Activated CD4-positive, alpha-beta T cell treated with anti-CD3 and anti-CD28 coated beads for 36 hours (primary cell): ENCODE measurements at regions of chr2 and their contacts with region 1.

Region 1: DNA sequence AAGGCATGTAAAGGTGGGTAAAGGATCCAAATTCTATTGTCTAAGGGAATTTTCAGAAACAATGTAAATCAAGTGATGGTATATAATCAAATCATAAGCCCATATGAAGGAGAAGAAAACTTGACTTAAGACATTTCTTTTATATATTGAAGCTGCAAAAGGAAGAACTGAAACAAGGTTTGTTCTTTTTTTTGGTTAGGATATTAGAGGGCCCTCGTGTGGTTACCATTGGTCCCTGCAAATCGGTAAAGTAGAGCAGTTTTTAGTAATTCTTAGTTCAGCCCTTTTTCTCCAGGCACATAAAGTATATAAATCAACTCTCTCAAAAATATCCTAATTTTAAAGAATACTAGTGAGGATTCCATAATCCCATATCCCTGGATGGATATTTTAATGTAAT is 105.6 kb upstream of the STK17B start:
- DNase-seq: peak; percentile 50
- ATAC-seq: peak; percentile 20
- H3K4me3 Mint-ChIP-seq: no peak overlapping the region
- H3K27ac Mint-ChIP-seq: peak overlapping the region; percentile 11
- H3K4me1 Mint-ChIP-seq: peaks cover 61% of the 10 kb centered on the region
- H3K27me3 Mint-ChIP-seq: no peaks in the 10 kb centered on the region

Region 2: DNA sequence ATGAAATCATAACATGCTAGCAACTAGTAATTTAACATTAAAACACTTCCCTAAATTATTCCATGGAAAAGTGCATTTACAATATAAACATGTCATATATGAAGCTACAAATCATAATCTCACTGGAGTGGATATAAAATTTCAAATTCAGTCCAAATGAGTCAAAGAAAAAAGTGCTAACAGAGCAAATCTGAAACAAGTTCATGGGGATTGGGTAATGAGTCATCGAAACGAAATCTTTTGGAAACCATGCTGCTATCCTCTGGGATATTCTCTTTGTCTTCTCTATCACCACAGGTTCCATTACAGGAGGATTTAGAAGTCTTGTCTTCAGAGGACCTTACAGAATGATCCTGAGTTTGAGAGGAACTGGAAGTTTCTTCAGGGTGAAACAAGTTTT is 139.7 kb before region 1 on chr2:
- CTCF ChIA-PET with region 1: interaction called, 10 read pairs
- POLR2A ChIA-PET with region 1: no interaction called
- intact Hi-C with region 1: loop called in 1 of 2 experiments (anchors 2 kb)
- DNase-seq: no peak
- ATAC-seq: no peak
- H3K4me3 Mint-ChIP-seq: no peak overlapping the region
- H3K27ac Mint-ChIP-seq: peak overlapping the region; percentile 59
- H3K4me1 Mint-ChIP-seq: peaks cover 26% of the 10 kb centered on the region
- H3K27me3 Mint-ChIP-seq: no peaks in the 10 kb centered on the region

Region 3: DNA sequence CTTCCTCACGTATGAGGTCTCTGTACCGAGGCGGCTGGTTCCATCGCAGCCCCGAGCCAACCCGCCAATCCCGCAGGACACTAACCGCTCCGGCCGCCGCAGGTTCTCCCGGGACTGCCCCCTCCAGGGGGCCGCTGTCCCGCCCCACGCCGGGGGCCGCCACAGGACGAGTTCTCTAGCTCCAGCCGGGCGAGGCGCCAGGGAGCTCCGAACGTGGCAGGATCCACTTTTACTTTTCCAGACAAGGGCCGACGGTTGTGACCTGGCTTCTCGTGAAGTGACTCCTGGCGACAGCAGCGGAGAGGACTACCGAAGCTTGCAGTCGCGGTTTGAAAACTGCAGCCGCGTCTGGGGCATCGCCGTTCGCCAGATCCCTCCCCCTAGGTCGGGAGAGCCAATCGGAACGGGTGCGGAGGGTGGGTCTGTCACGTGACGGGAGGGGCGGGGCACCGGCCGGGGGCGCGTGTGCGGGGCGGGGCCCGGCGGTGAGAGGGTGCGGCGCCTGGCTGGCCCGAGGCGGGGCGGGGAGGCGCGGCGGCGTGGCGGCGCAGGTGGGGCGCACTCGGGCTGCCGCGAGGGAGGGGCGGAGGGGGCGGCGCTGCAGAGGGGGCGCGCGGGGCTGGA is 105.6 kb before region 1 on chr2 and contains the start of gene STK17B:
- CTCF ChIA-PET with region 1: interaction called, 13 read pairs
- POLR2A ChIA-PET with region 1: interaction called, 4 read pairs
- intact Hi-C with region 1: loop called in 1 of 2 experiments (anchors 2 kb)
- DNase-seq: peak; percentile 99
- ATAC-seq: peak; percentile 76
- H3K4me3 Mint-ChIP-seq: peak within 1 kb of the TSS; percentile 92
- H3K27ac Mint-ChIP-seq: peak within 1 kb of the TSS; percentile 98
- H3K4me1 Mint-ChIP-seq: peaks cover 38% of the 10 kb centered on the region
- H3K27me3 Mint-ChIP-seq: no peaks in the 10 kb centered on the region
- total RNA-seq, gene STK17B: 159 to 178 TPM

Region 4: DNA sequence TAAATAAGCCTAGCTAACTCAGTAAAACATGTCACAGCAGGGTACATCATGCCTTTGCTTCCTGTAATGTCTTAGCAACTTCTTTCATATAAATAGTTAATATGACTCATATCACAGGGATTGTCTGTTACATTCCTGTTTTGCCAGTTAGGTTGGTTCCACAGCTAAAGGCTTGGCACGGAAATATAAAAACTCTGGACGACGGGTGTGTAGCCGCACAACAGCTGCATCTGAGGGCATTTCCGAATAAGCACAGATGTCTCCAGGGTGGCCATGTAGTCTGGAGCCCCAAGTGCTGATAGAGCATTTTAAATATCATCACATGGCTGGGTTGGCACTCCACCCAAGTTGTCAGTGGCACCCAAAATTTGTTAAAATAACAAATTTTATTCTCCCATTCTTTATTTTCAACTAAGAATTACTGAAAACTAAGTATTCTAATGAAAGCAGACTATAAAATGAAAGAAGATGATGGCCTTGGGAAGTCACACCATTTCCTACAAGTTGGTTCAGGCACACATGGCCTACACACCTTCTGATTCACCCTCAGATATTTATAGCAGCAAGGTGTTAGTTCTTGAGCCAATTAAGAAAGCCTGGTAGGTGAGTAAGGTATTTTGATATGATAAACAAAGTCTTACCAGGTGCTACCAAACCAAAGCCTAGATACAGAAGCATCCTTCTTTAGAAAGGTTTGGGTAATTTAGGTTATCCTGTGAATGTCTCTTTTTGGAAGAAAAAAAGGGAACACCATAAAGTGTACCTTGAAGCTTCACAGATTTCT is 43.8 kb before region 1 on chr2:
- CTCF ChIA-PET with region 1: interaction called, 4 read pairs
- POLR2A ChIA-PET with region 1: interaction called, 3 read pairs
- intact Hi-C with region 1: loop called in 1 of 2 experiments (anchors 2 kb)
- DNase-seq: no peak
- ATAC-seq: peak; percentile 45
- H3K4me3 Mint-ChIP-seq: peak overlapping the region; percentile 21
- H3K27ac Mint-ChIP-seq: peak overlapping the region; percentile 95
- H3K4me1 Mint-ChIP-seq: peaks cover 96% of the 10 kb centered on the region
- H3K27me3 Mint-ChIP-seq: no peaks in the 10 kb centered on the region

Region 5: DNA sequence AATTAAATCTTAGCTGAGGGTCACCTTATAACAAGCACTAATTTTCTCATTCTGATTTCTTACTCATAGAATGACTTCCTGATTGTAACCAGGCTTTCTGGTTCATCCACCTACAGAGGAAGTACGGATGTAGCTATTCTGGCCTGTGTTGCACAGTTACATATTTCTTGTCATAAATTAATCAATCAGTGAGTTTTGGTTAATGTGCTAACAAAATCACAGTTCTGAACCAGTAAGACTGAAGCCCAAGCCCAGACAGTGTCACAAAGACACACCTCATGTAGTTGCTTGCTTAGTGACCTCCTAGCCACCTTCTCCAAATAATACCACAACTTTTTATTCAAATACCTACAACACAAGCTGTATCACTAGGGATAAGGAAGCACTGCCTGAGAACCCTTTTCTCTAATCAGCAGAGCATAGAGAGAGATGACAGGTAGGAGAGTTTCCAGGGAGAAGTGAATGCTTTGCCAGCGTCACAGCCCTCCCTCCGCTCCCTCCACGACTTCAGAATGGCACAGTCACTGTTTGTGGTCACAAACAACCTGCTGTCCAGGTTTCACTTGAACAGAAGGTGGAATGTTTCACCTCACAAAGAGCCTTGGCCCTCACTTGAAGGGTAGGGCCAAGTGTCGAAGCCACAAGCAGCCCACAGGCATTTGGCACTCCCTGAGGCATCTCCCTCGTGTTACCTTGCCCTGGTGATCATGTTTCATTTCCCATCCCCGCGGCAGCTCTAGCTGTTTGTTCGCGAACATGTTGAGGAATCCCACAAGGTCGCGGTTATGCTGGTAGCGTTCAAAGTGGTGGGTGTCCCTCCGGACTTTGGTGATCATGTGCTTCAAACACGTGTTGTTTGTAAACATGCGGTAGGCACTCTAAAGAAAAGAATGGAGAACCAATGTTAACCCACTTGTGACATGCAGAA is 15.1 kb after region 1 on chr2:
- CTCF ChIA-PET with region 1: interaction called, 10 read pairs
- POLR2A ChIA-PET with region 1: no interaction called
- intact Hi-C with region 1: no loop called
- DNase-seq: no peak
- ATAC-seq: peak; percentile 16
- H3K4me3 Mint-ChIP-seq: no peak overlapping the region
- H3K27ac Mint-ChIP-seq: peak overlapping the region; percentile 57
- H3K4me1 Mint-ChIP-seq: peaks cover 55% of the 10 kb centered on the region
- H3K27me3 Mint-ChIP-seq: no peaks in the 10 kb centered on the region

Region 6: GRCh38 chr2:196307775-196308305 is 30.8 kb after region 1 on chr2:
- CTCF ChIA-PET with region 1: no interaction called
- POLR2A ChIA-PET with region 1: no interaction called
- intact Hi-C with region 1: no loop called
- DNase-seq: no peak
- ATAC-seq: no peak
- H3K4me3 Mint-ChIP-seq: no peak overlapping the region
- H3K27ac Mint-ChIP-seq: no peak overlapping the region
- H3K4me1 Mint-ChIP-seq: peaks cover 5% of the 10 kb centered on the region
- H3K27me3 Mint-ChIP-seq: peaks cover 3% of the 10 kb centered on the region

Region 7: DNA sequence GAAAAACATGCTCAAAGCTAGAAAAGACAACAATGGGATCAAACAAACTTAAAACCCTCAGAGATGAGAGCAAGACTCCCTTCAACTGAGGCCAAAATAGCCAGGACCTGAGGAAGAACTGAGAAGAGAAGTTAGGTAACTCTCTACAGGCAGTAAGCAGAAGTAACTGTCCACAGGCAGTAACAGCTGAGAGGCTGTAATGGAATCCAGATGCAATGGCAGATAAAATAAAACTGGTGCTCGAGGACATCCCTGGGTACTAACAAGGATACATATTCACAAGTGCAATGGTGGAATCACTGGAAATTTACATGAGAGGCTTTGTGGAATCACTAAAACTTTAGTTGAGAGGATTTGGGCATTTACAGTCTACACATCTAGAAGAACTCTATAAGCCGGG is 562.6 kb after region 1 on chr2:
- CTCF ChIA-PET with region 1: no interaction called
- POLR2A ChIA-PET with region 1: no interaction called
- intact Hi-C with region 1: no loop called
- DNase-seq: no peak
- ATAC-seq: no peak
- H3K4me3 Mint-ChIP-seq: no peak overlapping the region
- H3K27ac Mint-ChIP-seq: no peak overlapping the region
- H3K4me1 Mint-ChIP-seq: no peaks in the 10 kb centered on the region
- H3K27me3 Mint-ChIP-seq: no peaks in the 10 kb centered on the region